GM12878 (cell line): ENCODE measurements at regions of chrX and their contacts with region 1.

Region 1: DNA sequence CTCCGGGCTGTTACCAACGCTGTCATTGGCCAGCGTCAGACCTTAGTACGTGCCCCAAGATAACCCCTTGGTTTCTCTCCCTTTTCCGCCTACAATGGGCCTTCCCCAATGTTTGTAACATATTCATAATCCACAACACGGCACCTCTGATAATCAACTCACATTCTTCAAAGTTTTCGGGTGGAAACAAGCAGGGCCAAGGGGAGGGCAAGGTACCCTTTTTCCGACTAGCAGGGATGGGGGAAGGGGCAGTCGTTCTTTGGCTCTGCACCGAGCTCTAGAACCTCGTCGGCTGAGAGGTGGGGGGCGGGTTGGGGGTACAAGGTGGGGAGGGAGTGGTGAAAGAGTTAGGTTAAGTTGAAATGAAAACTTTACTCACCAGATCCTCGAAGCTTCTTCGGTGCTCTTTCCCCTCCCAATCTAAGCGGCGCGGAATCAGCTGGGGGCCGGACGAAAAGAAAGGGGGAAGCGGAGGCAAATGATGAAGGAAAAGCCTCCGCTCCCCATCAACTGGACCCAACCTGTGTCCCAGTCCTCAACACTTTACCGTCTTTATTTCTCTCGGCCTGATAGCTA is 1.4 kb downstream of the BRWD3 start:
- DNase-seq: peak; percentile 72
- ATAC-seq: peak; percentile 75
- H3K4me3 ChIP-seq: peak overlapping the region; percentile 93
- H3K27ac ChIP-seq: peak overlapping the region; percentile 74
- H3K4me1 ChIP-seq: no peaks in the 10 kb centered on the region; the same call in 1 of the 2 replicates
- H3K27me3 ChIP-seq: no peaks in the 10 kb centered on the region
- CTCF ChIP-seq: no peak
- EP300 ChIP-seq: no peak
- POLR2A ChIP-seq: no peak
- RAD21 ChIP-seq: no peak

Region 2: DNA sequence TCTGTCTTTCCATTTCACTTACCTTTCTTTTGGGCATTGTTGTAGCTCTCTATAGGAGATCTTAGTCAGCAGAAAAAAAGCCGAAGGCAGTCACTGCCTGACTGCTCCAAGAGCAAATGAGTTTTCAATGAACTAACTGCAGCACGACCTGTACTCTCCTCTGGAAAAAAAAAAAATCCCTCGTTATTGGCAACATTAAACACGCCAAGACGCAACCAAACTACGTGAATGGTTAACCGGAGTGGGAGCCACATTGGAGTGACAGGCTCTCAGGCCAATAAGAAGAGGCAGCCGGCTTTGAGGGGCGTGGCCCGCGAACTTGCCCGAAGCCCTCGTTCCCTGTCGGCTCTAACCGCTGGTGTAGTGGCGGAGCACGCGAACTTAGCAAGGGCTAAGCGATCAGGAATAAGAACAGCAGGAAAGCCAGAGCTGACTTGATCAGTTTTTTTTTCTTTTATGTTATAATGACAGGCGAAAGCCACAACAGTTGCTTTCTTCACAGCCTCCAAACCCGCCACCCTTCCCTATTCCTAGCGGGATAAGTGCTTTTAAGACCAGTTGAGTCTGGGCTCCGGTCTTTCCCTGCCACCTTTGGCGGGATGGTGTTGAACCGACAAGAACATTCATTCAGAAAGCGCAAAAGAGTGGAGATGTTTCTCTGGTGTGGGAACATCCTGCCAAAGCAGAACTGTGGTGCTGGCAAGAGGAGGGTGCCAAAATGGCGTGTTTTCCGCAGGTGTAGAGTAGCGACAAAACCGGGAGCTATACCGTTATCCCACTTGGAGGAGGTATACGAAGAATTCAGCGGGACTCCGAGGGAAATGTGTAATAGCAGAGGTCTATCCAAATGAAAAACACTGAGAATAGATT is 313.5 kb after region 1 on chrX:
- CTCF ChIA-PET with region 1: interaction called, 4 read pairs
- POLR2A ChIA-PET with region 1: interaction called, 9 read pairs
- RAD21 ChIA-PET with region 1: interaction called, 11 read pairs
- SMC1A ChIA-PET with region 1: no interaction called
- in situ Hi-C with region 1: loop called (anchors 5 kb)
- intact Hi-C with region 1: loop called (anchors 2 kb)
- DNase-seq: peak; percentile 76
- ATAC-seq: peak; percentile 96
- H3K4me3 ChIP-seq: peak overlapping the region; percentile 69
- H3K27ac ChIP-seq: peak overlapping the region; percentile 38
- H3K4me1 ChIP-seq: no peaks in the 10 kb centered on the region
- H3K27me3 ChIP-seq: no peaks in the 10 kb centered on the region
- CTCF ChIP-seq: no peak
- EP300 ChIP-seq: no peak
- POLR2A ChIP-seq: no peak
- RAD21 ChIP-seq: no peak

Region 3: GRCh38 chrX:81201671-81202455 is 393.6 kb after region 1 on chrX and contains the starts of genes HMGN5 and SH3BGRL:
- CTCF ChIA-PET with region 1: interaction called, 10 read pairs
- POLR2A ChIA-PET with region 1: interaction called, 3 read pairs
- RAD21 ChIA-PET with region 1: interaction called, 7 read pairs
- SMC1A ChIA-PET with region 1: interaction called, 6 read pairs
- in situ Hi-C with region 1: loop called (anchors 5 kb)
- intact Hi-C with region 1: loop called (anchors 2 kb)
- DNase-seq: peak; percentile 57
- ATAC-seq: peak; percentile 95
- H3K4me3 ChIP-seq: peak within 1 kb of the TSS; percentile 63
- H3K27ac ChIP-seq: peak within 1 kb of the TSS; percentile 91
- H3K4me1 ChIP-seq: no peaks in the 10 kb centered on the region
- H3K27me3 ChIP-seq: no peaks in the 10 kb centered on the region
- CTCF ChIP-seq: no peak
- EP300 ChIP-seq: no peak
- POLR2A ChIP-seq: peak; percentile 75
- RAD21 ChIP-seq: no peak
- polyA plus RNA-seq, gene HMGN5: 43.0 to 50.8 TPM
- polyA plus RNA-seq, gene SH3BGRL: 127 to 145 TPM

Region 4: GRCh38 chrX:82703551-82703950 is 1895.3 kb after region 1 on chrX:
- CTCF ChIA-PET with region 1: no interaction called
- POLR2A ChIA-PET with region 1: no interaction called
- RAD21 ChIA-PET with region 1: no interaction called
- SMC1A ChIA-PET with region 1: no interaction called
- in situ Hi-C with region 1: no loop called
- intact Hi-C with region 1: loop called (anchors 10 kb)
- DNase-seq: no peak
- ATAC-seq: no peak; the same call in 2 of the 3 replicates
- H3K4me3 ChIP-seq: no peak overlapping the region
- H3K27ac ChIP-seq: no peak overlapping the region
- H3K4me1 ChIP-seq: no peaks in the 10 kb centered on the region
- H3K27me3 ChIP-seq: no peaks in the 10 kb centered on the region
- CTCF ChIP-seq: no peak
- EP300 ChIP-seq: no peak
- POLR2A ChIP-seq: no peak
- RAD21 ChIP-seq: no peak